ENCODE measurements at regions of chr13 and their contacts with region 1.

Region 1: GRCh38 chr13:100674848-100675660 is 459 bp upstream of the TMTC4 start:
- DNase-seq: peak; percentile 100
- ATAC-seq: peak; percentile 93
- H3K4me3 Mint-ChIP-seq: peak overlapping the region; percentile 84
- H3K27ac Mint-ChIP-seq: peak overlapping the region; percentile 77
- H3K4me1 Mint-ChIP-seq: peaks cover 18% of the 10 kb centered on the region
- H3K27me3 Mint-ChIP-seq: no peaks in the 10 kb centered on the region
- CTCF ChIP-seq: no peak

Region 2: GRCh38 chr13:99606324-99607066 is 1068.6 kb before region 1 on chr13:
- CTCF ChIA-PET with region 1: interaction called, 3 read pairs
- POLR2A ChIA-PET with region 1: no interaction called
- intact Hi-C with region 1: loop called (anchors 1 kb)
- DNase-seq: peak; percentile 86
- ATAC-seq: peak; percentile 91
- H3K4me3 Mint-ChIP-seq: peak within 1 kb of the TSS; percentile 91
- H3K27ac Mint-ChIP-seq: peak within 1 kb of the TSS; percentile 86
- H3K4me1 Mint-ChIP-seq: peaks cover 38% of the 10 kb centered on the region
- H3K27me3 Mint-ChIP-seq: no peaks in the 10 kb centered on the region
- CTCF ChIP-seq: no peak

Region 3: GRCh38 chr13:100573121-100573520 is 101.9 kb before region 1 on chr13:
- CTCF ChIA-PET with region 1: interaction called, 12 read pairs
- POLR2A ChIA-PET with region 1: interaction called, 3 read pairs
- intact Hi-C with region 1: no loop called
- DNase-seq: peak; percentile 35
- ATAC-seq: peak; percentile 73
- H3K4me3 Mint-ChIP-seq: no peak overlapping the region
- H3K27ac Mint-ChIP-seq: no peak overlapping the region
- H3K4me1 Mint-ChIP-seq: no peaks in the 10 kb centered on the region
- H3K27me3 Mint-ChIP-seq: no peaks in the 10 kb centered on the region
- CTCF ChIP-seq: peak; percentile 54

Region 4: DNA sequence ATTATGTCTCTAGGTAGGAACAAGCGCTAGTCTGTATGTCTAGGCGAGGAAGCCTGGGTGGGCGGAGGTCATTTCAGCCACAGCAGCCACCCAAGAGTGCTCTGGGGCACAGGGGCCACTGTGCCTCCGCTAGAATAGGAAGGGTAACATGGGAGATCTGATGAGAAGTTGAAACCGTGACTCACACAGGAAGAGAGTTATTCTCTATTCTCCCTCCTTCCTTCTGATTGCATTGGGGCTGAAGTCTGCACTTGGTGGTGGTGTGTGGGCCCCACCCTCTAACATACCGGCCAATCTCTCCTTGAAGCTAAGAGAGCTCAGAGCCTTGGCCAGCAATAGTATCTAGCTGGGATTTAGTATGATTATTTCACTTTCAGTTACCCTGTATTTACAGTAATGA is 66.1 kb before region 1 on chr13:
- CTCF ChIA-PET with region 1: no interaction called
- POLR2A ChIA-PET with region 1: interaction called, 8 read pairs
- intact Hi-C with region 1: loop called (anchors 1 kb)
- DNase-seq: no peak
- ATAC-seq: peak; percentile 77
- H3K4me3 Mint-ChIP-seq: peak overlapping the region; percentile 32
- H3K27ac Mint-ChIP-seq: peak overlapping the region; percentile 78
- H3K4me1 Mint-ChIP-seq: peaks cover 50% of the 10 kb centered on the region
- H3K27me3 Mint-ChIP-seq: no peaks in the 10 kb centered on the region
- CTCF ChIP-seq: no peak

Region 5: DNA sequence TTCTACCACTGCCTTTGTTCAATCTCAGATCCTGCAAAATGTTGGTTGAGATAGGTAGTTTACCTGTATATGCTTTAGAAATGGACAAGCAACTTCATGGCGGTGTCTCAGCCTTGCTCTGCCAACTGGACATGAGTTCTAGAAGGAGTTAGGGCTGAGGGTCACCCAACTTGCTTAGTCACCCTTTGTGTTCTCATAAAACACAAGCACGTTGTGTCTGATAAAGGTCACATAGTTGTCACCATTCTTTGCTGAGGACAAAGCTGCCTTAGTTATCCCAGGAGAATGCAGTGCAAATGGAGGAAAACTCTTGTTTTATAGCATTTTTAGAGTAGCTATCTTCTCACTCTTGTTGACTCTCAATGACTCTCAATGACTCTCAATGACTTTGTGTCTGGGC is 217.9 kb after region 1 on chr13:
- CTCF ChIA-PET with region 1: no interaction called
- POLR2A ChIA-PET with region 1: no interaction called
- intact Hi-C with region 1: no loop called
- DNase-seq: no peak
- ATAC-seq: no peak
- H3K4me3 Mint-ChIP-seq: no peak overlapping the region
- H3K27ac Mint-ChIP-seq: no peak overlapping the region
- H3K4me1 Mint-ChIP-seq: no peaks in the 10 kb centered on the region
- H3K27me3 Mint-ChIP-seq: no peaks in the 10 kb centered on the region
- CTCF ChIP-seq: no peak

Region 6: GRCh38 chr13:102394158-102395053 is 1719.4 kb after region 1 on chr13:
- CTCF ChIA-PET with region 1: no interaction called
- POLR2A ChIA-PET with region 1: no interaction called
- intact Hi-C with region 1: loop called (anchors 5 kb)
- DNase-seq: peak; percentile 88
- ATAC-seq: peak; percentile 94
- H3K4me3 Mint-ChIP-seq: peak overlapping the region; percentile 87
- H3K27ac Mint-ChIP-seq: peak overlapping the region; percentile 56
- H3K4me1 Mint-ChIP-seq: peaks cover 8% of the 10 kb centered on the region
- H3K27me3 Mint-ChIP-seq: peaks cover 16% of the 10 kb centered on the region
- CTCF ChIP-seq: no peak